PC-9 (cell line): ENCODE measurements at regions of chr6 and their contacts with region 1.

Region 1: GRCh38 chr6:28136585-28137504 is 4.8 kb upstream of the ZKSCAN8 start:
- DNase-seq: peak; percentile 77 to 87
- H3K4me3 ChIP-seq: peak overlapping the region; percentile 84
- H3K27ac ChIP-seq: peak overlapping the region; percentile 17; the same call in 1 of the 2 replicates
- H3K4me1 ChIP-seq: peaks cover 18% of the 10 kb centered on the region
- H3K27me3 ChIP-seq: no peaks in the 10 kb centered on the region
- CTCF ChIP-seq: no peak

Region 2: DNA sequence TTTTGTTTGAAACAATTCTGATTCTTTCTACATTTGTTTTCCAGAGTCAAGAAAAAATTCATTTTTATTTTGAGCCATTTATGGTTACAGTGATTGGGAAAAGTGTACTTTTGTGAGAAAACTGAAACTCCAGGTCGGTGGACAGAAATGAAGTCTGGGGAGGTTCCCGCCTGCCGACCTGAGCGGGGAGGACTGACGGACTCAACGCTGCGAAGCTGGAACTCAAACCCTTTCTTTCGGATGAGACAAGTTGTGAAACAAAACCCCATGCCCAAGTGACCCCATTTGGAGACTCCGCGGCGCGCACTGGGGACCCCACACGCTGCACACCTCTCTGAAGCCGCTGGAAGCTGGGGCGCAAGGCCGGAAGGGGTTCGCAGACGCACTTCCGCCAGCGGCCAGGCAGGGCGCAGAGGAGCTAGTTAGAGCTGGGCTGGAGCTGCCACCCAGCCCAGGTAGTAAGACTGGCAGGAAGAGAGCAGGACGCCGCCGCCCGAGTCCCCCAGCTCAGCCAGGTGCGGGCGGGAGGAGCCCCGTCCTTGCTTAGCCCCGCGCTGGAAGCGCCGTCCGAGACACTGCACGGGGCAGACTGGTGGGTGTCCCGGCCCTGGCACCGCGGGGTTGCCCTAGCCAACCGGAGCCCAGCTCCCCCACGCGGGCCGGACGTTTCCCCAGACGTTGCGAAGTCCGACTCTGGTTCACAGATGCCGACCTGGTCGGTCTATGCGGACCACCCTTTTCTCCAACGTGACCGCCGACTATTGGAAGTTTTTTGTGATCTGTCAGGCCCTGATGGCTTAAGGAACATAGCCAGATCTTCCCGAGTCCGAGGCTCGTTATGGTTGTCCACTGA is 32.2 kb before region 1 on chr6:
- CTCF ChIA-PET with region 1: no interaction called
- POLR2A ChIA-PET with region 1: interaction called, 19 read pairs
- intact Hi-C with region 1: loop called (anchors 1 kb)
- DNase-seq: peak; percentile 73 to 80
- H3K4me3 ChIP-seq: peak overlapping the region; percentile 83
- H3K27ac ChIP-seq: no peak overlapping the region
- H3K4me1 ChIP-seq: peaks cover 11% of the 10 kb centered on the region
- H3K27me3 ChIP-seq: peaks cover 7% of the 10 kb centered on the region; the same call in 1 of the 2 replicates
- CTCF ChIP-seq: peak; percentile 74

Region 3: DNA sequence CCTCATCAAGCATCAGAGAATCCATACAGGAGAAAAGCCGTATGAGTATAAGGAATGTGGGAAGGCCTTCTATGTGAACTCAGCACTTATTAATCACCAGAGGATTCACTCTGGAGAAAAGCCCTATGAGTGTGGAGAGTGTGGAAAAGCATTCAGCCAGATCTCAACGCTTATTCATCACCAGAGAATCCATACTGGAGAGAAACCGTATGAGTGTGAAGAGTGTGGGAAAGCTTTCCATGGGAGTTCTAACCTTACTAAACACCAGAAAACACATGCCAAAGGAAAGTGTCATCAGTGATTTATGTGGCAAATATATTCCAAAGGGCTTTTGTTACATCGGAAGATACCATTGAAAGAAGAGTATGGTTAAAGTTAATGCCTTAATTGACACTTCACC is 30.2 kb after region 1 on chr6:
- CTCF ChIA-PET with region 1: no interaction called
- POLR2A ChIA-PET with region 1: no interaction called
- intact Hi-C with region 1: no loop called
- DNase-seq: no peak
- H3K4me3 ChIP-seq: no peak overlapping the region
- H3K27ac ChIP-seq: no peak overlapping the region
- H3K4me1 ChIP-seq: no peaks in the 10 kb centered on the region; the same call in 1 of the 2 replicates
- H3K27me3 ChIP-seq: no peaks in the 10 kb centered on the region
- CTCF ChIP-seq: no peak

Region 4: DNA sequence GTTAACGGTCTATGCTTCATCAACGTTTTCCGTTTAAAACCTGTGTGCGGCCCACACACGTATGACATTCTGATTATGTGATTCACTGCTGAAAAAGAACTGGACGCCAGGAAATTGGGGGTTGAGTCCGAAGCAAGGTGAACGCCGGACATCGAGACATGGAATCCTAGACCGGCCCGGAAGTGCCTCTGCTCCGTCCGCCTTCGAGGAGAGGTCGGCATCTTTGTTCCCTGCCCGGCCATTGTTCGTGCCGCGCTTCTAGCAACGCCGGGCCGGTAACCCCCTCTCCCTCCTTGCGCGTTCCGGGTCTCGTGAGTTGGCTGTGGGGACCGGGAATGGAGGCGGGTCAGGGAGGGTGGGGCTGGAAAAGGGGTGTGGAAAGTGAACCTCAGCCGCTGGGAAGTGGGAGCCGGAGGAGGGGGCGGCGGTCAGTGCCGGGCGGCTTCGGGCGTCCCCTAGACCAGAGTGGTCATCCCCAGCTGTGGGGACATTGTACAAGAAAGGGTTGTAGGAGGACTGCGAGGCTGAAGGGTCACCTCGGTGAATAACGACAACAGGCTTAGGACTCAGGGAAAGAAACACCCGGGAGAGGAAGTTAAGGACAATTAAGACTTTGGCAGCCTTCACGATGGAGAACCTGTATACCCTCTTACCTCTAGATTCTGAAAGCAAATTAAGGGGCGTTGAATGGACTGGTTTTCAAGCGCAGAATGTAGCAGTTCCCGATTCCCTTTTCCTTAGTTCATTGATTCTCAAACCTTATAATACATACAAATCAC is 88.4 kb after region 1 on chr6 and contains the start of gene ZSCAN9:
- CTCF ChIA-PET with region 1: no interaction called
- POLR2A ChIA-PET with region 1: no interaction called
- intact Hi-C with region 1: loop called (anchors 1 kb)
- DNase-seq: peak; percentile 86 to 87
- H3K4me3 ChIP-seq: peak within 1 kb of the TSS; percentile 79
- H3K27ac ChIP-seq: peak within 1 kb of the TSS; percentile 33
- H3K4me1 ChIP-seq: peaks cover 16% of the 10 kb centered on the region
- H3K27me3 ChIP-seq: no peaks in the 10 kb centered on the region
- CTCF ChIP-seq: no peak
- total RNA-seq, gene ZSCAN9: 19.2 and 20.4 TPM in 2 replicates

Region 5: GRCh38 chr6:28355743-28356665 is 219.2 kb after region 1 on chr6:
- CTCF ChIA-PET with region 1: interaction called, 4 read pairs
- POLR2A ChIA-PET with region 1: no interaction called
- intact Hi-C with region 1: loop called (anchors 1 kb)
- DNase-seq: peak; percentile 75 to 80
- H3K4me3 ChIP-seq: peak overlapping the region; percentile 70
- H3K27ac ChIP-seq: peak overlapping the region; percentile 55
- H3K4me1 ChIP-seq: peaks cover 28% of the 10 kb centered on the region
- H3K27me3 ChIP-seq: no peaks in the 10 kb centered on the region
- CTCF ChIP-seq: peak; percentile 86

Region 6: DNA sequence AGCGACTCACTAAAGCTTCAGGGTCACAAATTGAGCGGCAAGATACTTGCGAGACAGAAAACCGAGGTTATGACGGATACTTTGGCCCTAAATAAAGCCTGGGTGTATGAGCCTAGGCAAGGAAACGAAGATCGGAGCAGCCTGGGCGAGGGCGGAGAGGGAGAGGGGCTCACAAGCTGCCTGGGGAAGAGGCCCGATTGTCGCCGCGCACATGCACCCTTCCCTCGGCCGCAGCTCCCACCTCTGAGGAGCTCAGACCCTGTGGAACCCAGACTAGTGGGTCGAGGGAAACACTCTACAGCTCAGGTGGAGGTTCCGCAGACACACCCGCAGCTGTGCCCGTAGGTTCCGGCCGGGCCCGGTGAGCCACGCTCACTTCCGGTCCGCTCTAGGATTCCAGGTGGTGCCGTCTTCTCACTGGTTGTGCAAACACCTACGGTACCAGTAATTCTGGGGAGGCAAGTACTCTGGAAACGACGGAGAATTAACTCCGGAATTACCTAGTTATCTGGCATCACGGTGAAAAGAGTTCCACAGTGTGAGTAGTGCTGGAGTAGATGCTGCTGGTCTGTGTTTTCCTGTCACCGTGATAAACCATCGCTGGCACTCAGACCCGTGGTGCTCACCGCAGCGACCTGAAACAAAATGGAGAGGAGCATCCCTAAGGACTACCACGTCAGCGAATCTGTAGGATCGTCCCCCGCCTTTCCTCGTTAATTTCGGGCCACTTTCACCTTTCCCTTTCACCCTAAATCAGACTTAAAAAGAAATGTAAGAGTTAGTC is 450.3 kb after region 1 on chr6:
- CTCF ChIA-PET with region 1: no interaction called
- POLR2A ChIA-PET with region 1: no interaction called
- intact Hi-C with region 1: loop called (anchors 10 kb)
- DNase-seq: peak; percentile 58 to 75
- H3K4me3 ChIP-seq: peak overlapping the region; percentile 98
- H3K27ac ChIP-seq: peak overlapping the region; percentile 50; the same call in 1 of the 2 replicates
- H3K4me1 ChIP-seq: peaks cover 32% of the 10 kb centered on the region
- H3K27me3 ChIP-seq: no peaks in the 10 kb centered on the region
- CTCF ChIP-seq: no peak